ENCODE measurements at regions of chr2 and their contacts with region 1.

Region 1: GRCh38 chr2:230160112-230160660 is 59.6 kb downstream of the SP110 start:
- DNase-seq: peak; percentile 33
- H3K4me3 Mint-ChIP-seq: no peak overlapping the region
- H3K27ac Mint-ChIP-seq: no peak overlapping the region
- H3K4me1 Mint-ChIP-seq: peaks cover 13% of the 10 kb centered on the region
- H3K27me3 Mint-ChIP-seq: peaks cover 2% of the 10 kb centered on the region

Region 2: GRCh38 chr2:229780856-229781773 is 379.1 kb before region 1 on chr2:
- intact Hi-C with region 1: loop called (anchors 2 kb)
- DNase-seq: no peak
- H3K4me3 Mint-ChIP-seq: no peak overlapping the region
- H3K27ac Mint-ChIP-seq: no peak overlapping the region
- H3K4me1 Mint-ChIP-seq: peaks cover 45% of the 10 kb centered on the region
- H3K27me3 Mint-ChIP-seq: no peaks in the 10 kb centered on the region

Region 3: DNA sequence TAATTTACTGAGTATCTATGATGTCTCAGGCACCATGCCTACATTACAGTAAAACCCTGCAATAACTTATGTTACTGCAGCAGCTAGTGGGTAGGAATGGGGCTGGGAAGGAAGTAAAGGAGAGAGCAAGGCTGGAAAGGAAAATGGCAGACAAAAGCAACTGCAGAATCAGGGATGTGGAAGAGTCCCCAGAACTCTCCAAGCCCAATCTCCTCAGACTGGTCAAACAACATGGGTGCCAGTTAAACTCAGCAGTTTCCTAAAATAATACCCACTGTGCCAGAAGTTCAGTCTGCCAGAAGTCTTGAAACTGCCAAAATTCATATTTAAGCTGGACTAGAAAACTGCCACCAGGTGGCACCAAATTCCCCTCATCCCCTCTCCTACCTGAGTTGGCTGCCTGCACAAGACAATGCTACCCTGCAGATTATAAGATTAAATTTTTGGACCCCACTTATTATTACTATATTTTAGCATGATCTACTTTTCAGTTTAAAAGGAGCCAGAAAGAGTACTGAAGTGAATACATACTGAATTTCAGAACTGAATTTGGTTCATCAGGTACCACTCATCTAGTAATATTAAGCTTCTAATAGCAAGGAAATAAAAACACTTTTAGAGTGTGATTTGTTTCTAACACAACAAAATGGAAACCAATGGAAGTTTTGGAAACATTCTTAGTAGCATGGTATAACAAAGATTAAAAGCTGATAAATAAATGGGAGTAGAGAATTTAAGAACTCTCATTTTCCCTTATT is 359.0 kb before region 1 on chr2:
- intact Hi-C with region 1: loop called (anchors 1 kb)
- DNase-seq: peak; percentile 50
- H3K4me3 Mint-ChIP-seq: no peak overlapping the region
- H3K27ac Mint-ChIP-seq: no peak overlapping the region
- H3K4me1 Mint-ChIP-seq: no peaks in the 10 kb centered on the region
- H3K27me3 Mint-ChIP-seq: no peaks in the 10 kb centered on the region

Region 4: GRCh38 chr2:230007931-230008707 is 152.1 kb before region 1 on chr2:
- intact Hi-C with region 1: loop called (anchors 1 kb)
- DNase-seq: peak; percentile 66
- H3K4me3 Mint-ChIP-seq: no peak overlapping the region
- H3K27ac Mint-ChIP-seq: no peak overlapping the region
- H3K4me1 Mint-ChIP-seq: peaks cover 11% of the 10 kb centered on the region
- H3K27me3 Mint-ChIP-seq: no peaks in the 10 kb centered on the region

Region 5: DNA sequence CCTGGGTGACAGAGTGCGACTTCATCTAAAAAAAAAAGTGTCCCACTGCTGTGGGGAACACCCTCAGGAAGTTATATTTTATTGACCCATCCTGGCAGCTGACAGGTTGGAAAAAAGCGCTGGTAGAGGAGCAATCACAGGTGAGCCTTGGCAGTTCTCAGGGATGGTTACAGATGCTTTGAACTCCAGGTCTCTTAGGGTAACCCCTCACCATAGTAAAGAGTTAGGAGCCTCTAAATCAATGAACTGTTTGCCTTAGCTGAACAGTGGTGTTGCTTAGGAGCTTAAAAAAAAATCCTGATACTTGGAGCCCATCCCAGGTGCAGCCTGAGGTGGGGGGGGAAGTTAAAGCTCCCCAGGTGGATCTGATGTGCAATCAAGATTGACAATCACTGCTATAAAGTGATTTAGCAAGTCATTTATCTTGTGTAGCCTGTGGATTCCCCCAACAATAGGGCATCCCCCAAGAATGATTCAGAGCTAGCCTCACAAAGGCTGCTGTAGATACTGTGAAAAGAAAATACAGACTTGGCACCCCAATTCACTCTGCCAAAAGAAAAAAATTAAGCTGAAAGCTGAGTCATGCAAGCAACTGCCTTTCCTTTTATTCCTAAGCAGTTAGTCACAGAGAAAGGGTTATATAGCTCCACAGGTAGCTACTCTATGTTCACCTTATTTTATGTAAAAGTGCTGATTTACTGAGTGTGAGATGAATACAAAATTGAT is 106.3 kb before region 1 on chr2:
- intact Hi-C with region 1: no loop called
- DNase-seq: no peak
- H3K4me3 Mint-ChIP-seq: no peak overlapping the region
- H3K27ac Mint-ChIP-seq: no peak overlapping the region
- H3K4me1 Mint-ChIP-seq: peaks cover 12% of the 10 kb centered on the region
- H3K27me3 Mint-ChIP-seq: no peaks in the 10 kb centered on the region

Region 6: GRCh38 chr2:230124757-230125431 is 35.3 kb before region 1 on chr2:
- intact Hi-C with region 1: no loop called
- DNase-seq: no peak
- H3K4me3 Mint-ChIP-seq: no peak overlapping the region
- H3K27ac Mint-ChIP-seq: no peak overlapping the region
- H3K4me1 Mint-ChIP-seq: no peaks in the 10 kb centered on the region
- H3K27me3 Mint-ChIP-seq: peaks cover 3% of the 10 kb centered on the region

Measured in activated T-helper 1 cell treated with anti-CD3 and anti-CD28 coated beads, Interleukin-12 subunit alpha, Interleukin-12 subunit beta, Interleukin-2, Interleukin-4 antibody, amounts not matched to agents 30 ng/mL and 10 ng/mL and 1 ng/mL, durations not matched to agents 14 hours and 24 hours and 36 hours (primary cell).